Endothelial cell of umbilical vein (primary cell): ENCODE measurements at regions of chr20 and their contacts with region 1.

Region 1: GRCh38 chr20:22691369-22692118 is 107.2 kb upstream of the FOXA2 start:
- DNase-seq: peak; percentile 82
- H3K4me3 ChIP-seq: peak overlapping the region in 1 of 3 experiments; percentile 4
- H3K27ac ChIP-seq: no peak overlapping the region
- H3K4me1 ChIP-seq: peaks cover 6% of the 10 kb centered on the region
- H3K27me3 ChIP-seq: no peaks in the 10 kb centered on the region
- CTCF ChIP-seq: peak; percentile 83 to 87
- POLR2A ChIP-seq: no peak

Region 2: GRCh38 chr20:22729180-22729579 is 37.6 kb after region 1 on chr20:
- CTCF ChIA-PET with region 1: interaction called, 16 read pairs
- POLR2A ChIA-PET with region 1: no interaction called
- dilution Hi-C with region 1: no loop called
- intact Hi-C with region 1: no loop called
- DNase-seq: peak; percentile 16
- H3K4me3 ChIP-seq: no peak overlapping the region
- H3K27ac ChIP-seq: no peak overlapping the region
- H3K4me1 ChIP-seq: peaks cover 6% of the 10 kb centered on the region
- H3K27me3 ChIP-seq: no peaks in the 10 kb centered on the region
- CTCF ChIP-seq: no peak
- POLR2A ChIP-seq: no peak

Region 3: DNA sequence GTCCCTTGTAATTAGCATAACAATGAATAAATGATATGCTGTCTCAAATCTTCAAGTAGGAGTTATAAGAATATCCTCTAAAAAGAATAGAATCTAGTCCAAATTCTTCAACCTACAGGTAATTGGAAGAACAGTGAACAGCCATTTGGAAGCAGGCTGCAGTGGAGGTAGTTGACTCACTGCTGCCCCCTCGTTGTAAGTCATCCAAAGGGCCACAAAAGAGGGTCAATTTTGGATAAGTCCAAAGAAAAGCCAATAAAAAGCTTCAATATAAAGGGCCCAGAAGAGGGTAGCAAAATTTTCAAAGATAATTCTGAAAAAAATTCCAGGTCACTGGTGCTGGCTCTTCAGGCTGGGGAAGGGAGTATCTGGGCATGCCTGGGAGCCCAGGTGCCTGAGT is 282.8 kb after region 1 on chr20:
- CTCF ChIA-PET with region 1: interaction called, 306 read pairs
- POLR2A ChIA-PET with region 1: no interaction called
- dilution Hi-C with region 1: no loop called
- intact Hi-C with region 1: loop called (anchors 1 kb)
- DNase-seq: peak; percentile 28
- H3K4me3 ChIP-seq: no peak overlapping the region
- H3K27ac ChIP-seq: no peak overlapping the region
- H3K4me1 ChIP-seq: no peaks in the 10 kb centered on the region
- H3K27me3 ChIP-seq: peaks cover 4 to 11% of the 10 kb centered on the region in 2 experiments
- CTCF ChIP-seq: peak; percentile 60 to 64
- POLR2A ChIP-seq: no peak

Region 4: DNA sequence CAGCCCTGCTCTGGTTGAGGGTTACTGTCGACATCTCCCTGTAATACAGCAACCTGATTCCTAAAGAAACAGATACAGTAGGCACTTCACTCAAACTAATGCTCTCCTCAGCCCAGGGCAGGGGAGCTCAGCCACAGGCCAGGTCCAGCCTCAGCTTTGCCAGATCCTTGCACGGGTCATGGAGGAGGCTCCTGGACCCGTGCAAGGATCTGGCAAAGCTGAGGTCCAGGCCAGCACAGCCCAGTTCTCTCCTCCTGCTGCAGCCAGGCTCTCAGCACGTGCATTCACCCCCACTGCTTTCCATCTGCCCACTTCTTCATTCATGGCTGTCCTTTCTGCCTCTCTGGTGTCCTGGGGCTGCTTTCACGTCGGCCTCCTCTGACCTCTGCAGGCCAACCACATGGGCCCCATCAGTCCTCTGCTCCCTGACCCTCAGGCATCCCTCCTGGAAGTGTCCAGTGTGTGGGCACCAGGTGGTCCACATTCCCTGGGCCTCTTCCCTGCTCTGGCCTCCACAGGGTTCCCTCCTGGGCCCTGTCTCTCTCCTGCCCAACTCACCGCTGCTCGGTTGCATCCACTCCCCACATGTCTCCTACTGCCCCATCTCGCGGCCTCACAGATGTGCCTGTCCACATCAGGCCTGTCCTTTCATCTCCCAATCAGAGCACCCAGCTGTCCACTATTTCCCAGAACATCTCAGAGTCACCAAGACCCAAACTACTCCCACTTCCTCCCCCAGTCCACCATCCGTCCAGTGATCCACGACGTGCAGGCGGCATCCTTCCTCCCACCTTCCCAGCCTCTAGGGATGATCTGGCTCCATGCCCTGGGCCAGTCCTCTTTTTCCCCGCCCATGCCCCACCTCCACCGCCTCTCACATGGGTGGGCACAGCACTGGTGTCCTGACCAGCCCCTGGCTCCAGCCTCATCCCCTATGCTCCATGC is 406.4 kb after region 1 on chr20:
- CTCF ChIA-PET with region 1: no interaction called
- POLR2A ChIA-PET with region 1: no interaction called
- dilution Hi-C with region 1: no loop called
- intact Hi-C with region 1: no loop called
- DNase-seq: no peak
- H3K4me3 ChIP-seq: no peak overlapping the region
- H3K27ac ChIP-seq: no peak overlapping the region
- H3K4me1 ChIP-seq: peaks cover 27% of the 10 kb centered on the region
- H3K27me3 ChIP-seq: no peaks in the 10 kb centered on the region
- CTCF ChIP-seq: no peak
- POLR2A ChIP-seq: no peak

Region 5: GRCh38 chr20:23147964-23148730 is 456.6 kb after region 1 on chr20:
- CTCF ChIA-PET with region 1: interaction called, 5 read pairs
- POLR2A ChIA-PET with region 1: no interaction called
- dilution Hi-C with region 1: no loop called
- intact Hi-C with region 1: loop called (anchors 5 kb)
- DNase-seq: peak; percentile 84
- H3K4me3 ChIP-seq: no peak overlapping the region
- H3K27ac ChIP-seq: peak overlapping the region; percentile 88
- H3K4me1 ChIP-seq: peaks cover 85% of the 10 kb centered on the region
- H3K27me3 ChIP-seq: no peaks in the 10 kb centered on the region
- CTCF ChIP-seq: no peak
- POLR2A ChIP-seq: no peak

Region 6: GRCh38 chr20:23245553-23246181 is 554.1 kb after region 1 on chr20:
- CTCF ChIA-PET with region 1: interaction called, 32 read pairs
- POLR2A ChIA-PET with region 1: no interaction called
- dilution Hi-C with region 1: no loop called
- intact Hi-C with region 1: loop called (anchors 1 kb)
- DNase-seq: peak; percentile 77
- H3K4me3 ChIP-seq: no peak overlapping the region
- H3K27ac ChIP-seq: no peak overlapping the region
- H3K4me1 ChIP-seq: no peaks in the 10 kb centered on the region
- H3K27me3 ChIP-seq: no peaks in the 10 kb centered on the region
- CTCF ChIP-seq: peak; percentile 67 to 88
- POLR2A ChIP-seq: no peak

Region 7: GRCh38 chr20:23350196-23350903 is 658.8 kb after region 1 on chr20 and contains the start of gene NXT1:
- CTCF ChIA-PET with region 1: interaction called, 19 read pairs
- POLR2A ChIA-PET with region 1: interaction called, 4 read pairs
- dilution Hi-C with region 1: no loop called
- intact Hi-C with region 1: no loop called
- DNase-seq: peak; percentile 98
- H3K4me3 ChIP-seq: peak within 1 kb of the TSS; percentile 20 to 79 (median 77)
- H3K27ac ChIP-seq: peak within 1 kb of the TSS; percentile 94
- H3K4me1 ChIP-seq: peaks cover 19% of the 10 kb centered on the region
- H3K27me3 ChIP-seq: no peaks in the 10 kb centered on the region
- CTCF ChIP-seq: no peak
- POLR2A ChIP-seq: peak; percentile 19
- total RNA-seq, gene NXT1: 27.1 and 28.5 TPM in 2 replicates